HEK293T (cell line): ENCODE measurements at regions of chrX and their contacts with region 1.

Region 1: DNA sequence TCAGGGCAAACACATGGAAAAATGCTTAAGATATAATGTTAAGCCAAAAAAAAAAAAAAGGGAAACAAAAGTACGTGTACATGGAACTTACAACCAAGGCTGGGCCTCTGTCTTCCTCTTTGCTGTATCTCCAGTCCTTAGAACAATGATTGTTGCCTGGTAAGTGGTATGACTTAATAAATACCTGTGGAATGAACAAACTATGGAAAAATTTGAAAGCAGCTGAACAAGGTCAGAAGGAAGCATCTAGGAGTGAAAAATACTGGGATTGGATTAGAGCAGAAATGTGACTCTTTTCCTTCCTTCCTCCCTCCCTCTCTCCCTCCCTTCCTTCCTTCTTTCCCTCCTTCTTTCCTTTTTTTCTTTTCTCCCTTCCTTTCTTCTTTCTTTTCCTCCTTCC is 54.2 kb upstream of the SMIM10 start:
- DNase-seq: no peak

Region 2: DNA sequence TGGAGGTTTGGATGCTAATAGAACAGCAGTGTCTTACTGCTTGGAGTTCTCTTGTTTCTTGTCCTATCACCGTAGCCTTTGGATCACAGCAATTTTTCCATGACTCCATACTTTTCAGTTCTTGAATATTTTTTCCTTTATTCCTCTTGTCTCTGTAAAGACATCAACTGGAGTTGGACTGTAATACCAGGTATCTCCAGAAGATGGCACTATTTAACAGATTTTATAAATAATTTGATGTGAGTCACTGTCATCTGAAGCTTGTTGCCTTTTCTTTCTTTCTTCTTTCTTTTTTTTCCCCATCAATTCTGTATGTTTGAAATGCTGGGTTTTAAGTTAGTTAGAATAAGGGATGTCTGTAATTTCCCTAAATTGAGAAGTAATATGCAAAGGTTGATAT is 452.5 kb before region 1 on chrX:
- CTCF ChIA-PET with region 1: interaction called, 12 read pairs
- POLR2A ChIA-PET with region 1: no interaction called
- DNase-seq: peak; percentile 28